ENCODE measurements at regions of chr1 and their contacts with region 1.

Region 1: DNA sequence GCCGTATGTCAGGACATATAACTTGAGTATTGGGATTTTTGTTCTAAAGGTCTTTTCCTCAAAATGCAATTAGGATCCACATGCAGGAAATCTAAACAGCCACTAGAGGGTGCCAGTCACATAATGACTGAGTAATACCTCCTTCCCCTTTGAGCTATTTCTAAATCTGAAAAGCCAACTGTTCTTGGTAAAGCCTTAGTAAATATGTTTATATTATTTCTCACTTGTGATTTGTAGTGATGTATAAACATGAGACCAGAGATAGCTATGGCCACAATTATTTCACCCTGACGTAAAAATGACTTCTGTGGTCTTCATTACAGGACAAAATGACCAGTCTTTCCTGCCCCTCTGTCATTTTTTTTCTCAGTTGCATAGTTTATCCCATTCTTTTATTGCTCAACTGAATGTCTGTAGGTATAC is 41.0 kb upstream of the DR1 start:
- DNase-seq: peak; percentile 63
- H3K4me3 ChIP-seq: no peak overlapping the region; a peak in 1 of 4 replicates
- H3K27ac ChIP-seq: no peak overlapping the region
- H3K4me1 ChIP-seq: no peaks in the 10 kb centered on the region
- H3K27me3 ChIP-seq: no peaks in the 10 kb centered on the region
- CTCF ChIP-seq: peak; percentile 94
- EP300 ChIP-seq: no peak
- RAD21 ChIP-seq: peak; percentile 94

Region 2: GRCh38 chr1:93283496-93283895 is 21.2 kb before region 1 on chr1:
- CTCF ChIA-PET with region 1: interaction called, 14 read pairs
- POLR2A ChIA-PET with region 1: no interaction called
- DNase-seq: no peak
- H3K4me3 ChIP-seq: no peak overlapping the region
- H3K27ac ChIP-seq: no peak overlapping the region
- H3K4me1 ChIP-seq: no peaks in the 10 kb centered on the region
- H3K27me3 ChIP-seq: no peaks in the 10 kb centered on the region
- CTCF ChIP-seq: no peak
- EP300 ChIP-seq: no peak
- RAD21 ChIP-seq: no peak

Region 3: GRCh38 chr1:93317207-93317606 is 12.5 kb after region 1 on chr1:
- CTCF ChIA-PET with region 1: interaction called, 34 read pairs
- POLR2A ChIA-PET with region 1: interaction called, 3 read pairs
- DNase-seq: no peak
- H3K4me3 ChIP-seq: no peak overlapping the region
- H3K27ac ChIP-seq: no peak overlapping the region
- H3K4me1 ChIP-seq: no peaks in the 10 kb centered on the region
- H3K27me3 ChIP-seq: no peaks in the 10 kb centered on the region
- CTCF ChIP-seq: no peak
- EP300 ChIP-seq: no peak
- RAD21 ChIP-seq: no peak

Region 4: GRCh38 chr1:93340090-93340489 is 35.4 kb after region 1 on chr1:
- CTCF ChIA-PET with region 1: interaction called, 19 read pairs
- POLR2A ChIA-PET with region 1: interaction called, 4 read pairs
- DNase-seq: no peak
- H3K4me3 ChIP-seq: no peak overlapping the region
- H3K27ac ChIP-seq: no peak overlapping the region
- H3K4me1 ChIP-seq: peaks cover 0 to 19% of the 10 kb centered on the region in 2 experiments; a peak in 2 of 4 replicates
- H3K27me3 ChIP-seq: no peaks in the 10 kb centered on the region
- CTCF ChIP-seq: no peak
- EP300 ChIP-seq: no peak
- RAD21 ChIP-seq: no peak

Region 5: DNA sequence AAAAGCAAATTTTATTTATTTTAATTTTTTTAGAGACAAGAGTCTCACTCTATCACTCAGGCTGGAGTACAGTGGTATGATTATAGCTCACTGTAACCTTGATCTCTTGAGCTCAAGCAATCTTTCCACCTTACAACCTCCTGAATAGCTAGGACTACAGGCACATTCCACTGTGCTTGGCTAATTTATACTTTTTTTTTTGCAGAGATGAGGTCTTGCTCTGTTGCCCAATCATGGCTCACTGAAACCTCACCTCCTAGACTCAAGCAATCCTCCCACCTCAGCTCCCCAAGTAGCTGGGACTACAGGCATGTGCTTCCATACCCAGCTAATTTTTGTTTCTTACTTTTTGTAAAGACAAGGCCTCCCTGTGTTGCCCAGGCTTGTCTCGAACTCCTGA is 90.5 kb after region 1 on chr1:
- CTCF ChIA-PET with region 1: interaction called, 10 read pairs
- POLR2A ChIA-PET with region 1: no interaction called
- DNase-seq: no peak
- H3K4me3 ChIP-seq: no peak overlapping the region
- H3K27ac ChIP-seq: no peak overlapping the region
- H3K4me1 ChIP-seq: no peaks in the 10 kb centered on the region
- H3K27me3 ChIP-seq: no peaks in the 10 kb centered on the region
- CTCF ChIP-seq: no peak
- EP300 ChIP-seq: no peak
- RAD21 ChIP-seq: no peak

Region 6: GRCh38 chr1:93846211-93846991 is 541.7 kb after region 1 on chr1:
- CTCF ChIA-PET with region 1: interaction called, 16 read pairs
- POLR2A ChIA-PET with region 1: no interaction called
- DNase-seq: peak; percentile 90
- H3K4me3 ChIP-seq: peak overlapping the region; percentile 85 to 94
- H3K27ac ChIP-seq: peak overlapping the region; percentile 88 to 96
- H3K4me1 ChIP-seq: peaks cover 23% of the 10 kb centered on the region in 2 experiments; a peak in 3 of 4 replicates
- H3K27me3 ChIP-seq: no peaks in the 10 kb centered on the region
- CTCF ChIP-seq: peak; percentile 39
- EP300 ChIP-seq: no peak
- RAD21 ChIP-seq: no peak; the same call in 1 of the 2 replicates

Measured in SK-N-SH (cell line).